Activated naive CD8-positive, alpha-beta T cell treated with anti-CD3 and anti-CD28 coated beads, Interleukin-2, amount 10 ng/mL, durations not matched to agents 7 days and 5 days (primary cell): ENCODE measurements at regions of chr10 and their contacts with region 1.

Region 1: DNA sequence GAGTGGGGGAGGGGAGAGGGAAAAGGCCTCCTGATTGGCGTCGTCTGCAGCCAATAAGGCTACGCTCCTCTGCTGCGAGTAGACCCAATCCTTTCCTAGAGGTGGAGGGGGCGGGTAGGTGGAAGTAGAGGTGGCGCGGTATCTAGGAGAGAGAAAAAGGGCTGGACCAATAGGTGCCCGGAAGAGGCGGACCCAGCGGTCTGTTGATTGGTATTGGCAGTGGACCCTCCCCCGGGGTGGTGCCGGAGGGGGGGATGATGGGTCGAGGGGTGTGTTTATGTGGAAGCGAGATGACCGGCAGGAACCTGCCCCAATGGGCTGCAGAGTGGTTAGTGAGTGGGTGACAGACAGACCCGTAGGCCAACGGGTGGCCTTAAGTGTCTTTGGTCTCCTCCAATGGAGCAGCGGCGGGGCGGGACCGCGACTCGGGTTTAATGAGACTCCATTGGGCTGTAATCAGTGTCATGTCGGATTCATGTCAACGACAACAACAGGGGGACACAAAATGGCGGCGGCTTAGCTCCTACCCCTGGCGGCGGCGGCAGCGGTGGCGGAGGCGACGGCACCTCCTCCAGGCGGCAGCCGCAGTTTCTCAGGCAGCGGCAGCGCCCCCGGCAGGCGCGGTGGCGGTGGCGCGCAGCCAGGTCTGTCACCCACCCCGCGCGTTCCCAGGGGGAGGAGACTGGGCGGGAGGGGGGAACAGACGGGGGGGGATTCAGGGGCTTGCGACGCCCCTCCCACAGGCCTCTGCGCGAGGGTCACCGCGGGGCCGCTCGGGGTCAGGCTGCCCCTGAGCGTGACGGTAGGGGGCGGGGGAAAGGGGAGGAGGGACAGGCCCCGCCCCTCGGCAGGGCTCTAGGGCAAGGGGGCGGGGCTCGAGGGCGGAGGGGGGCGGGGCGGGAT is at the start of gene KAT6B:
- DNase-seq: peak; percentile 97
- ATAC-seq: peak; percentile 89
- H3K4me3 Mint-ChIP-seq: peak within 1 kb of the TSS; percentile 94
- H3K27ac Mint-ChIP-seq: peak within 1 kb of the TSS; percentile 91
- H3K4me1 Mint-ChIP-seq: peaks cover 46% of the 10 kb centered on the region
- H3K27me3 Mint-ChIP-seq: no peaks in the 10 kb centered on the region
- total RNA-seq, gene KAT6B: 36.7 to 47.2 TPM

Region 2: GRCh38 chr10:75019370-75019769 is 193.0 kb after region 1 on chr10:
- POLR2A ChIA-PET with region 1: interaction called, 11 read pairs
- DNase-seq: no peak
- ATAC-seq: peak; percentile 35
- H3K4me3 Mint-ChIP-seq: no peak overlapping the region
- H3K27ac Mint-ChIP-seq: no peak overlapping the region
- H3K4me1 Mint-ChIP-seq: peaks cover 15% of the 10 kb centered on the region
- H3K27me3 Mint-ChIP-seq: no peaks in the 10 kb centered on the region